HEK293T (cell line): ENCODE measurements at regions of chr10 and their contacts with region 1.

Region 1: GRCh38 chr10:22340362-22341189 is 4.7 kb upstream of the SPAG6 start:
- DNase-seq: peak; percentile 71

Region 2: GRCh38 chr10:22427890-22428571 is 87.5 kb after region 1 on chr10:
- CTCF ChIA-PET with region 1: no interaction called
- POLR2A ChIA-PET with region 1: interaction called, 12 read pairs
- DNase-seq: peak; percentile 37

Region 3: GRCh38 chr10:22560913-22561239 is 220.3 kb after region 1 on chr10:
- CTCF ChIA-PET with region 1: interaction called, 10 read pairs
- POLR2A ChIA-PET with region 1: no interaction called
- DNase-seq: peak; percentile 38